ENCODE measurements at regions of chr17 and their contacts with region 1.

Region 1: DNA sequence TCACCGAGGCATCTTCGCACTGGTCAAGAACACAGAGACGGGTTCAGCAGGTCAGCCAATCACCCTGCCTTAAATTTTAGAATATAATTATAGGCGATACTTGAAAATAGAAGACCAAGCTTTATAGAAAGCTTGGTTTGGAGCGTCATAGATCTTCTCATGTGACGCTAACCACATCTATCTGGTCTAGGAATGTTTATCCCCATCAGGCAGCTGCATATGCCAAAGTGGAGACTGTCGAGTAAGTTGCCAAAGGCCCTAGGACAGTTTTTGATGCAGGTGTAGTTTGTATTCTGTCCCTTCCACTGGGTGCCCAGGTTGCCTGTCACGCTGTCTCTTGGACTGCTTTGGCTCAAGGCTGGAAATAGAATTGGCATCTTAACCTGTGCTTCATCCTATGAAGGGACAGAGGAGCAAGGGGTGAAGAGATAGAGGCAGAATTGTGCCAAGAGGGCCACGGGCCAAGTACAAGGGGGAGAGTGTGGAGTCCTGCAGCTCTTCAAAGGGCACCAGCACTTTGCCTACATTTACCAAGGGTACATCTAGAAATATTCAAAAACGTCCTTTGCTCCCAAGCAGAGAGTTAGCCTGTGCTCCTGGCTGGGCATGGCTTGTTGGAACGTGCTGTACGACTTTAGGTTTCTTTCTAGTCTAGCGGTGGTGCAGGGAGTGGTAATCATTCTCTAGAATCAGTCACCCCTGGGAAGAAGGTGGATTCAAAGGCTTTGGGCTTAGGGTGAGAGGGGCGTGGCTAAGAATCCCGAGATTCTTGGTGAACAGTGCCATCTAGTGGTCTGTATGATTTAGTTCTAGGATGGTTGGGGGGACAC is 5.3 kb upstream of the WIPI1 start:
- DNase-seq: peak; percentile 95
- H3K4me3 ChIP-seq: no peak overlapping the region
- H3K27ac ChIP-seq: no peak overlapping the region
- H3K4me1 ChIP-seq: no peaks in the 10 kb centered on the region
- H3K27me3 ChIP-seq: no peaks in the 10 kb centered on the region

Region 2: GRCh38 chr17:68172461-68172954 is 290.1 kb before region 1 on chr17:
- in situ Hi-C with region 1: loop called (anchors 10 kb)
- DNase-seq: peak; percentile 65
- H3K4me3 ChIP-seq: no peak overlapping the region
- H3K27ac ChIP-seq: no peak overlapping the region
- H3K4me1 ChIP-seq: no peaks in the 10 kb centered on the region
- H3K27me3 ChIP-seq: no peaks in the 10 kb centered on the region

Region 3: GRCh38 chr17:68566442-68566738 is 103.8 kb after region 1 on chr17:
- in situ Hi-C with region 1: no loop called
- DNase-seq: peak; percentile 55
- H3K4me3 ChIP-seq: no peak overlapping the region
- H3K27ac ChIP-seq: peak overlapping the region; percentile 16; the same call in 1 of the 2 replicates
- H3K4me1 ChIP-seq: peaks cover 29% of the 10 kb centered on the region
- H3K27me3 ChIP-seq: no peaks in the 10 kb centered on the region

Measured in GM23248 (cell line).